Activated CD8-positive, alpha-beta T cell treated with anti-CD3 and anti-CD28 coated beads for 36 hours (primary cell): ENCODE measurements at regions of chr3 and their contacts with region 1.

Region 1: GRCh38 chr3:134473868-134474546 is 11.8 kb downstream of the ANAPC13 start:
- DNase-seq: peak; percentile 91
- ATAC-seq: peak; percentile 84
- H3K4me3 Mint-ChIP-seq: no peak overlapping the region
- H3K27ac Mint-ChIP-seq: no peak overlapping the region
- H3K4me1 Mint-ChIP-seq: peaks cover 2% of the 10 kb centered on the region
- H3K27me3 Mint-ChIP-seq: no peaks in the 10 kb centered on the region
- CTCF ChIP-seq: peak; percentile 89

Region 2: DNA sequence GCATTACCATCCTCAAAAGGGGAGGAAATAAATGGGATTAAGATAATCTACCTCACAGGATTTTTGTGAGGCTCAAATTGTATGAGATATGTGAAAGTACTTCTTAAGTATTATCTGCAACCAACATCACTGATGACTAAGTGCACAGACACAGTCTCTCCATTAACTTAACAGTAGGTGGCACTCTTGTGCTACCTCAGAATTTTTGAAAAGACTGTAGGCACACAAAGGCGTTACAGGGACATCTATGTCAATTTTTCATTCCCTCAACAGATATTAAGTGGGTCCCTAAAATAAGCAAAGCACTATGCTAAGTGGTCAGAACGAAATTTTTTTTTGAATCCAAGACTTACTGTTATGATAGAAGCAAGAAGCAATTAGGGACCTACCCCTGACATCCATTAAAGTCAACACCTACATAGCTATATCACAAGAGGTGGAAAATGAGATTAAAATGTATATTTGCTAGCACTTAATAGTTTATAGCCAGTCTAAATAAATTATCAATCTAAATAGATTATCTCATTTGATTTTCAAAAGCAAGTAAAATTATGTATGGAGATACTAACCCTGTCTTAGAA is 276.2 kb before region 1 on chr3:
- CTCF ChIA-PET with region 1: interaction called, 21 read pairs
- POLR2A ChIA-PET with region 1: interaction called, 4 read pairs
- intact Hi-C with region 1: loop called (anchors 5 kb)
- DNase-seq: no peak
- ATAC-seq: peak; percentile 88
- H3K4me3 Mint-ChIP-seq: no peak overlapping the region
- H3K27ac Mint-ChIP-seq: no peak overlapping the region
- H3K4me1 Mint-ChIP-seq: peaks cover 8% of the 10 kb centered on the region
- H3K27me3 Mint-ChIP-seq: no peaks in the 10 kb centered on the region
- CTCF ChIP-seq: peak; percentile 77

Region 3: DNA sequence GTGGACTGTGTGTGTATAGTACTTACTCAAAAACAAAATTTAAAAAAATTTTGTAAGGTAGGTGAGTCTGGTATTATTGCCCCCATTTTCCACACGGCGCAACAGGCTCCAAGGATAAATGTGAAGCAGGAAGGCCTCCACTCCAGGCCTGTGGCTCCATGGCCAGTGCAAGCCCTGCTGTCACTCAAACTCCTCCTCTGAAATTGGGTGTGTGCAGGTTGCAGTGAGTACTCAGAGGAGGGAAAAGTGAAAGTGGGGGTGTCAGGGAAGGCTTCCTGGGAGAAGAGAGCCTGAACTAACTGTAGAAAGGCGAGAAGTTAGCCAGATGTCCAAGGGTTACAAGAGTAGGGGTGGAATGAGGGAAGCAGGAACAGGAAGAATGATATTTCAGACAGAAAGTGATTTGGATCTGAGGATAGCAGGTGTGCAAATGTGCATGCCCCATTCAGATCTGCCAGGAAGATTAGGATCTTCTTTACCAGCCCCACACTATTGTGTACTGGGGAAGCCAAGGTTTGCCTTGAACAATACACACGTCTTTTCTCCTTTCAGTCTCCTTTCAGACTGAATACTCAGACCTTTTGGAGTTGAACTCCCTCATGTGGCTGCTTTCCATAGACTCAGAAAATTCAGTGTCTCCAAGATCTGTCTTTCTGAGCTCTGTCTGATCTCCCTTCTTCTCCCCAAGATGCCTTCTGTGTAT is 174.7 kb before region 1 on chr3:
- CTCF ChIA-PET with region 1: interaction called, 16 read pairs
- POLR2A ChIA-PET with region 1: no interaction called
- intact Hi-C with region 1: no loop called
- DNase-seq: no peak
- ATAC-seq: peak; percentile 37
- H3K4me3 Mint-ChIP-seq: no peak overlapping the region
- H3K27ac Mint-ChIP-seq: no peak overlapping the region
- H3K4me1 Mint-ChIP-seq: no peaks in the 10 kb centered on the region
- H3K27me3 Mint-ChIP-seq: peaks cover 16% of the 10 kb centered on the region
- CTCF ChIP-seq: no peak

Region 4: GRCh38 chr3:134308350-134308891 is 165.6 kb before region 1 on chr3:
- CTCF ChIA-PET with region 1: interaction called, 111 read pairs
- POLR2A ChIA-PET with region 1: interaction called, 3 read pairs
- intact Hi-C with region 1: loop called (anchors 2 kb)
- DNase-seq: peak; percentile 86
- ATAC-seq: peak; percentile 90
- H3K4me3 Mint-ChIP-seq: no peak overlapping the region
- H3K27ac Mint-ChIP-seq: no peak overlapping the region
- H3K4me1 Mint-ChIP-seq: peaks cover 2% of the 10 kb centered on the region
- H3K27me3 Mint-ChIP-seq: peaks cover 34% of the 10 kb centered on the region
- CTCF ChIP-seq: peak; percentile 96

Region 5: DNA sequence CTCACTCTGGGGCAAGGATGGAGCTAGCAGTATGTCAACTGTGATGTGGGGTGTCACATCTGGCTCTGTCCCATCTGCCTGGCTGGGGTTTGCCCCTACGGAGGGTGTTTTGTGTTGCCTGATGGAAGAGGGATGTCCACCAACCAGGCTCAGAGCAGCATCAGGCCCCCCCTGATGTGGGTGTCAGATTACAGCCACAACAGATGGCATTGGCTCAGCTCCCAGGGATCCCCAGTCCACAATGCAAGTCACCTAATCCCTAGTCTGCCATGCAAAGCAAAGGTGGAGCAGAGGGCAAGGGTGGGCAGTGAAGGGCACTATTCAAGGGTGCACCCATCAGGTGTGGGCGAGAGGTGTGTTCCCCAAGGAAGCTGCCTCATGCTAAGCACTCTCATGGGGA is 50.9 kb before region 1 on chr3:
- CTCF ChIA-PET with region 1: no interaction called
- POLR2A ChIA-PET with region 1: no interaction called
- intact Hi-C with region 1: no loop called
- DNase-seq: no peak
- ATAC-seq: no peak
- H3K4me3 Mint-ChIP-seq: no peak overlapping the region
- H3K27ac Mint-ChIP-seq: no peak overlapping the region
- H3K4me1 Mint-ChIP-seq: no peaks in the 10 kb centered on the region
- H3K27me3 Mint-ChIP-seq: peaks cover 2% of the 10 kb centered on the region
- CTCF ChIP-seq: no peak

Region 6: GRCh38 chr3:134453631-134454030 is 20.4 kb before region 1 on chr3:
- CTCF ChIA-PET with region 1: interaction called, 12 read pairs
- POLR2A ChIA-PET with region 1: no interaction called
- intact Hi-C with region 1: no loop called
- DNase-seq: no peak
- ATAC-seq: no peak
- H3K4me3 Mint-ChIP-seq: no peak overlapping the region
- H3K27ac Mint-ChIP-seq: no peak overlapping the region
- H3K4me1 Mint-ChIP-seq: no peaks in the 10 kb centered on the region
- H3K27me3 Mint-ChIP-seq: peaks cover 6% of the 10 kb centered on the region
- CTCF ChIP-seq: no peak

Region 7: GRCh38 chr3:134485718-134486576 is 11.9 kb after region 1 on chr3 and contains the starts of genes ANAPC13 and CEP63:
- CTCF ChIA-PET with region 1: interaction called, 68 read pairs
- POLR2A ChIA-PET with region 1: interaction called, 5 read pairs
- intact Hi-C with region 1: no loop called
- DNase-seq: peak; percentile 97
- ATAC-seq: peak; percentile 83
- H3K4me3 Mint-ChIP-seq: peak within 1 kb of the TSS; percentile 91
- H3K27ac Mint-ChIP-seq: peak within 1 kb of the TSS; percentile 99
- H3K4me1 Mint-ChIP-seq: peaks cover 45% of the 10 kb centered on the region
- H3K27me3 Mint-ChIP-seq: no peaks in the 10 kb centered on the region
- CTCF ChIP-seq: no peak
- total RNA-seq, gene ANAPC13: 27.3 to 28.0 TPM
- total RNA-seq, gene CEP63: 25.3 to 27.0 TPM

Region 8: DNA sequence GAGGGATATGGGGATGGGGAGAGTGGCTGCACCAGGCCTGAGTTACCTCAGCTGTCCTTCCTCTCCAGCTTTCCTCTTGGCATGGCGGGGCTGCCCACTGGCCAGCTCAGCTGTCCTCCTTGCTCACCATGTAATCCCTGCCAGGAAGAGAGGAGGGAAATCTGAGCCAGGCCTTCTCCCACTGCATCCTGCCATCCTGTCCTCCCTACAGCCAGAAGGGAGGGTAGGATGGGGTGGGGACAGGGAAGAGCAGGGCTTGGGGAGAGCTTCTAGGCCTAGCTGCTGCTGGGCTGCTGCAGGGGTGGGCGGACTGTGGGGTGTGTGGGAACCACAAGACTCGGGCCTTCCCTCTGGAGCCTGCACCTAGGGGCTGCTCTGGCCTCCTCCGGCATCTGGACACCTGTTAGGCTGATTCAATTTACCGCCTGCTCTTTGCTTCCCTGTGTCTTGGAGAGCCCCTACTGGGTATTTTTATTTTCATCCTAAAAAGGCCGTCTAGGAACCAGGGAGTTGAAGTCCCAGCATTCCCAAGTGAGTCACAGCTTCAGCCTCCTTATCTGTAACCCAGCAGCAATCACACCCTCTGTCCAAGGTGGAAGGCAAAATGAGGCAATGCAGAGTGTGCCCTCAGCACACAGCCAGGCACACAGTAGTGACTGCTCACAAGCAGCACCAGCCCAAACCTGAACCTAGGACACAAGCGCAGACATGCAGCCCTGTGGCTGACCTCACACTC is 189.9 kb after region 1 on chr3:
- CTCF ChIA-PET with region 1: no interaction called
- POLR2A ChIA-PET with region 1: no interaction called
- intact Hi-C with region 1: no loop called
- DNase-seq: no peak
- ATAC-seq: no peak
- H3K4me3 Mint-ChIP-seq: no peak overlapping the region
- H3K27ac Mint-ChIP-seq: no peak overlapping the region
- H3K4me1 Mint-ChIP-seq: no peaks in the 10 kb centered on the region
- H3K27me3 Mint-ChIP-seq: peaks cover 6% of the 10 kb centered on the region
- CTCF ChIP-seq: no peak